PC-9 (cell line): ENCODE measurements at regions of chr10 and their contacts with region 1.

Region 1: GRCh38 chr10:88565072-88565471 is 18.0 kb downstream of the RNLS start:
- DNase-seq: no peak
- H3K4me3 ChIP-seq: no peak overlapping the region
- H3K27ac ChIP-seq: no peak overlapping the region
- H3K4me1 ChIP-seq: no peaks in the 10 kb centered on the region
- H3K27me3 ChIP-seq: no peaks in the 10 kb centered on the region
- CTCF ChIP-seq: peak; percentile 60

Region 2: DNA sequence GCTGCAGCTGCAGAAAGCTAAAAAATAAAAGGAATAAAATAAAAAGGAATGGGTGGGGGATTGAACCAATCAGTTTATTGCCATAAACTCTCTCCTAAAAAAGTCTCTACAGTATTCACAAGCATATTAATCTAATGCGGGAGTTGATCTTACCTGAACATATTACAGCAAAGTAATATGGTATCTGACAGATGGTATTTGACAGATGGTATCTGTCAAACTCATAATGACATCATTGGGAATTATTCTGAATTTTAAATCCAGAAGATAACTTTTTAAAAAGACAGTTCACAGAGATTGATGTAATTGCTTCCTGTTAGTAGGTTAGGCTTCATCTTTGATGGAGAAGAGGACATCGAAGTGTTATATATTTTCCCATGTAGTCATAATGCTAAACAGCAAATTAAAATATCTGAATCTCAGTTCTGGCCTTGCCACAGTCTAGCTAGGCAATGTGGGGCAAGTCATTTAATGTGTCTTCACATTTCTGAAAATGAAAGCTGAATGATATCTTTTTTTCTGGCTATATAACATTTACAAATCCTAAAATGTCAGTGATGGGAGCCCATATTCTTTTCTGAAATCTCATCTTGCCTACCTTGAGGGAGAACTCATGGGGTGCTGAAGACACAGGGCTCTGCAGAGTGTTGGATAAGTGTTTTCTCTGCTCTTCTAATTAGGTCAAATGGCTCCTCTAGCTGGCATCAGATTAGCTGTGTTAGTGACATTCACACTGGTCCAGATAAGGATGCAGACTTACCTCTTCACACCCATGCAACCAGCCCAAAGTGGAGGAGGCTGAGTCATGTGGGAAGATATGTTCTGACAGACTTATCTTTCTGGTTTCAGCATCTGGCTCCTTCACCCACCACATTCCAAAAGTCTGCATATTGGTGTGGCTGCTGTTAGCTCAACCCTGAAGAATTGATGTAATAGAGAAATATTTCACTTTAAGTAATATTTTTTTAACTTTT is 235.4 kb after region 1 on chr10:
- CTCF ChIA-PET with region 1: no interaction called
- POLR2A ChIA-PET with region 1: interaction called, 10 read pairs
- intact Hi-C with region 1: no loop called
- DNase-seq: no peak
- H3K4me3 ChIP-seq: no peak overlapping the region
- H3K27ac ChIP-seq: no peak overlapping the region
- H3K4me1 ChIP-seq: 0 out of 2 replicates have a peak, but pooled peaks cover 9% of the 10 kb centered on the region
- H3K27me3 ChIP-seq: no peaks in the 10 kb centered on the region
- CTCF ChIP-seq: no peak

Region 3: DNA sequence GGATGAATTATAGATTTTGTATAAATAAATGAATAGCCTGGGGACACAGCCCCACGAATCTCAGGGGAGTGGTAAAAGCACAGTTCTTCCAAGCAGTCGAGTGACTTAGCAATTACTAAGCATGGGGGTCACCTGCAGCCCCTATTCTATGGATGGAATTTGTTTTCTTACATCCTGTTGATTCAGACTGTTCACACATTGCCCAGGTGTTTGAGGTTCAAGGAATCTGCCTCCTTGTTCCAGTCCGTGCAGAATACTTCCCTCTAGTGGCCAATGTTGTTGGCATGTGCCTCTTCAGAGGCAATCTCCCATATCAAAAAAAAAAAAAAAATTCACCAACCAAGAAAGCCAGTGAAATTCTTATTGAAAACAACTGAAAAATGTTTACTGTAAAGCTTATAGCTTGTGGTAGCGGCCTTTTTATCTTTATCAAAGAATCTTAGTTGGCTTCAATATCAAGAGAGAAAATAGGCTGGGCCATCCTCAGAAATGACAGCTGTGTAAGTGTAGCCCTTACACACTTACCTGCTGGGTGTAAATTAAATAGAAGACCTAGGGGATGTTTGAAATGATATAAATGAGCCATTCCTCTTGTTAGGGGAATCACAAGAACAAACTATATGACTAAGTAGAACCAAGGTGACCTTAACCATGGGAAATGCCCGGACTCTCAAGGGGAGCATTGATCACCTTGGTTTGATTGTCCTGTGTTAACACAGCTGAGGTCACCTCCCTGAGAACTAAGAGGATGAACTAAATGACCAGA is 245.3 kb after region 1 on chr10:
- CTCF ChIA-PET with region 1: no interaction called
- POLR2A ChIA-PET with region 1: no interaction called
- intact Hi-C with region 1: loop called (anchors 1 kb)
- DNase-seq: peak; percentile 22 to 60
- H3K4me3 ChIP-seq: no peak overlapping the region
- H3K27ac ChIP-seq: no peak overlapping the region
- H3K4me1 ChIP-seq: no peaks in the 10 kb centered on the region; the same call in 1 of the 2 replicates
- H3K27me3 ChIP-seq: no peaks in the 10 kb centered on the region
- CTCF ChIP-seq: peak; percentile 70